ENCODE measurements at regions of chr2 and their contacts with region 1.

Region 1: DNA sequence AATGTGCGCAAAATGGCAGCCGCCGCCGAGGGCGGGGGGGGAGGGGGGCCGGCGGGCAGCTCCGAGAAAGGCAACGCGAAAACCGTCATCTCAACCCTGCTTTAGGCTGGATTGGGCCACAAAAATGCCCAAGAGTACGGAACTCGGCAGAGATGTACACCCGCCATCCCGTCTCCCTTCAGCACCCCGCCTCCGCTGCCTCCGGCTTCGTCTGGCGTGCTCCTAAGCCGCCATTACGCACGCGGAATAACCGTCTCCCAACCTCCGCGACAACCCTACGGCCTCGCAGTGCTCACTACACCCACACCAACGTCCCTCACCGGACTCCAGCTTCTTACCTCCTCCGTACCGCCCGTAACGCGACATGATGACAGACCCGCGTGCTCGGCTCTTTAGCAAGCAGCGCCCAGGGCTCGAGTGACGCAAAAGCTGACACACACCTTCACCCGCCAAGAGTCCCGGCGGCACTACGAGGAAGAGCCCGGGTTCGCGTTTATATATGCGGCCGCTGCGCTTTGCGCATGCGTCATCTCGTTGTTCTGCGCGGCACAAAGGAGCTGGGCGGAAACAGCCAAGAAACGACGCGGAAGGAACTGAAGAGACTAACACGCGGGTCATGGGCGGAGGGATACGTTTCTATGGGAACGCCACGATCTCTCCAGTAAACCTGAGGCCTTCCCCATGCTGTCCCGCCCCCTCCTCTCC is at the start of gene SRSF7:
- DNase-seq: peak; percentile 97 to 99
- H3K4me3 ChIP-seq: peak within 1 kb of the TSS; percentile 90
- H3K4me3 Mint-ChIP-seq: peak within 1 kb of the TSS; percentile 99
- H3K27ac Mint-ChIP-seq: peak within 1 kb of the TSS; percentile 100
- H3K4me1 ChIP-seq: peaks cover 31% of the 10 kb centered on the region
- H3K4me1 Mint-ChIP-seq: peaks cover 50% of the 10 kb centered on the region
- H3K27me3 ChIP-seq: no peaks in the 10 kb centered on the region
- H3K27me3 Mint-ChIP-seq: peaks cover 3% of the 10 kb centered on the region
- CTCF ChIP-seq: no peak
- total RNA-seq, gene SRSF7: 224 and 233 TPM in 2 replicates

Region 2: GRCh38 chr2:38581193-38582147 is 169.6 kb before region 1 on chr2:
- CTCF ChIA-PET with region 1: interaction called, 11 read pairs
- POLR2A ChIA-PET with region 1: interaction called, 13 read pairs
- intact Hi-C with region 1: no loop called
- DNase-seq: peak in 1 of 2 experiments; percentile 69
- H3K4me3 ChIP-seq: no peak overlapping the region
- H3K4me3 Mint-ChIP-seq: no peak overlapping the region
- H3K27ac Mint-ChIP-seq: no peak overlapping the region
- H3K4me1 ChIP-seq: peaks cover 4% of the 10 kb centered on the region; the same call in 1 of the 2 replicates
- H3K4me1 Mint-ChIP-seq: peaks cover 9% of the 10 kb centered on the region
- H3K27me3 ChIP-seq: no peaks in the 10 kb centered on the region
- H3K27me3 Mint-ChIP-seq: no peaks in the 10 kb centered on the region
- CTCF ChIP-seq: peak; percentile 50 to 82

Region 3: DNA sequence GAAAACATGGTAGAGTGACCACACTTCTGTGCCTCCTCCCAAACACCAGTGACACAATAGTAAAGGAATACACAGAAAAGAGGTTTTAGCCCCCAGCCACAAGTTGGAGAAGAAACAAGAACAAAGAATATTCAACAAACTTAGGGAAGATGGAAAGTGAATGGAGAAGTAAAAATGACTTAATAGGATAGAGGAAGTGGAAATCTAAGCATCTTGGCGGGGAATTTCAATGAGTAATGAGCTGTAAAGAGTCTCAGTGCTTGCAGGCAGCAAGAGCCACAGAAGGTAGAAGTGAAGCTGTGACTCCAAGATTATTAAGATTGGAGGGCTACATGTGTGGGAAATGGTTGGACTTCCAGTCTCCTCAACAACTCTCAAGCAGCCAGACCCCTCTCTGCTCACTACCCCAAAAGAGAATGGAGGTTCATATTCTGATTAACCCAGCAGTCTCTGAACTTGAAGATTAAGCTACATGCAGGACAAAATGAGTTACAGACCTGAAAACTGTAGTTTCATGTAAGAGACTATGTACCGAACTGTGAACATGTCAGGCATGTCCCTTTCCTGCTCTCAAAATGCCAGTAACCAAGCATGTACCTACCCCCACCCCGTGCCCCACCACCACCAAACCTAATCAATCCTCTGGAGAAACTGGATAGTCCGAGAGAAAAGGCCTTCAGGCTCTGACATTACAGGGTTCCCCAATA is 131.4 kb before region 1 on chr2:
- CTCF ChIA-PET with region 1: no interaction called
- POLR2A ChIA-PET with region 1: interaction called, 11 read pairs
- intact Hi-C with region 1: no loop called
- DNase-seq: no peak
- H3K4me3 ChIP-seq: no peak overlapping the region
- H3K4me3 Mint-ChIP-seq: no peak overlapping the region
- H3K27ac Mint-ChIP-seq: no peak overlapping the region
- H3K4me1 ChIP-seq: no peaks in the 10 kb centered on the region
- H3K4me1 Mint-ChIP-seq: peaks cover 8% of the 10 kb centered on the region
- H3K27me3 ChIP-seq: no peaks in the 10 kb centered on the region
- H3K27me3 Mint-ChIP-seq: no peaks in the 10 kb centered on the region
- CTCF ChIP-seq: no peak

Region 4: DNA sequence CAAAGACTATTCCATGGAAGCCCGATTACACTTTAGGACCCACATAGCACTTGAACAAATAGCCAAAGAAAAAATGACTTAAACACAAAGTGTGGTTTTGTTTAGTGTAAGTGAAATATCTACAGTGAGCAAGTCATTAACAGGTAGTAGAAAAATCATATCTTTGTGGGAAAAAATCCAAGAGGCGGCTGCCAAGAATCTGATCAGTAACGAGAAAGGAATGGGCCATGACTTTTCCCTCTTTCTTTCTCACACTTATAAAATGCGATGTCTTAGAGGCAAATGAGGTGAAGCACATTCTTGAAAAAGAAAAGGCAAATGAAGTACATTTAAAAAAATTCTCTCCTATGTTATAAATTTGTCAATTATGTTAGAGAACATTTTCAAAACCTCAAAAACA is 14.1 kb after region 1 on chr2:
- CTCF ChIA-PET with region 1: interaction called, 3 read pairs
- POLR2A ChIA-PET with region 1: interaction called, 39 read pairs
- intact Hi-C with region 1: no loop called
- DNase-seq: no peak
- H3K4me3 ChIP-seq: no peak overlapping the region
- H3K4me3 Mint-ChIP-seq: no peak overlapping the region
- H3K27ac Mint-ChIP-seq: no peak overlapping the region
- H3K4me1 ChIP-seq: peaks cover 5% of the 10 kb centered on the region; the same call in 1 of the 2 replicates
- H3K4me1 Mint-ChIP-seq: no peaks in the 10 kb centered on the region
- H3K27me3 ChIP-seq: no peaks in the 10 kb centered on the region; the same call in 1 of the 2 replicates
- H3K27me3 Mint-ChIP-seq: no peaks in the 10 kb centered on the region
- CTCF ChIP-seq: no peak

Region 5: GRCh38 chr2:38797276-38797675 is 46.2 kb after region 1 on chr2:
- CTCF ChIA-PET with region 1: no interaction called
- POLR2A ChIA-PET with region 1: interaction called, 15 read pairs
- intact Hi-C with region 1: no loop called
- DNase-seq: peak; percentile 45 to 61
- H3K4me3 ChIP-seq: no peak overlapping the region
- H3K4me3 Mint-ChIP-seq: no peak overlapping the region
- H3K27ac Mint-ChIP-seq: peak overlapping the region; percentile 48
- H3K4me1 ChIP-seq: peaks cover 29% of the 10 kb centered on the region
- H3K4me1 Mint-ChIP-seq: peaks cover 10% of the 10 kb centered on the region
- H3K27me3 ChIP-seq: no peaks in the 10 kb centered on the region
- H3K27me3 Mint-ChIP-seq: no peaks in the 10 kb centered on the region
- CTCF ChIP-seq: no peak

Region 6: DNA sequence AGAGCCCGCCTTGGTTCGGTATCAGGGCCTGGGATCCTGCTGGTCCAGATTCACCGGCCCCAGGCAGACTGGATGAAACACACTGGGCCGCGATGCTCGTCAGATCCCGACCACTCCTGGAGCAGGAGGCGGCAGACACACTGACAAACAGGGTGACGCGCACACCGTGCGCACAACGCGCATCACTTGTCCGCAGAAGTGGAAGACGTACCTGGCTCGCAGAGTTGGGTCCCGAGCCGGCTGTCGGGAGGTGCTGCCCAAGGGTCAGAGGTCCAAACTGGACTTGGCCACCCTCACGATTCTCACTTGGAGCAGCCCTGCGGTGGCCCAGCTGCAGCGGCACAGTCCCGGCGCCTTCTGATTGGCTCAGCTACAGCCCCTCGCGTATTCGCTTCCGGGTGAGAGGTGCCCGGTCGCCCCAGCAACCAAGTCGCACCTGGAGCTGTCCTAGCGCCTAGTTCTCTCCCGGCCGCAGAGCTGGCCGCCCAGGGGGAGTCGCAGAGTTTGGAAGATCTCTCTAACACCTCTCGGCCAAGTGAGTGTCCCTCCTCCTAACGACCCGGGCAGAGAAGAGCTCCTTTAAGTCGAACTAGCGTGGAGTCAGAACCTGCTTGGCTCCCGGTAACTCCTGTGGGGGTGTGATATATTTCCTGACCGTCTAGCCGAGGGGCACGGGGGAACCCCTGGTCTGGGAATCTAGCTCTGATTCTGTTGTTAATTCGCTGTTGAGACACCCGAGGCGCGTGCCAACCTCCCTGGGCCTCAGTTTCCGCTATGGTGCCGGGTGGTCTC is 124.7 kb after region 1 on chr2 and contains the starts of genes DHX57 and MORN2:
- CTCF ChIA-PET with region 1: no interaction called
- POLR2A ChIA-PET with region 1: interaction called, 19 read pairs
- intact Hi-C with region 1: no loop called
- DNase-seq: peak; percentile 90 to 92
- H3K4me3 ChIP-seq: peak within 1 kb of the TSS; percentile 74
- H3K4me3 Mint-ChIP-seq: peak within 1 kb of the TSS; percentile 90
- H3K27ac Mint-ChIP-seq: peak within 1 kb of the TSS; percentile 91
- H3K4me1 ChIP-seq: no peaks in the 10 kb centered on the region
- H3K4me1 Mint-ChIP-seq: peaks cover 8% of the 10 kb centered on the region
- H3K27me3 ChIP-seq: no peaks in the 10 kb centered on the region
- H3K27me3 Mint-ChIP-seq: no peaks in the 10 kb centered on the region
- CTCF ChIP-seq: no peak
- total RNA-seq, gene DHX57: 18.3 and 20.6 TPM in 2 replicates
- total RNA-seq, gene MORN2: 4.8 and 5.5 TPM in 2 replicates